ENCODE measurements at regions of chr2 and their contacts with region 1.

Region 1: DNA sequence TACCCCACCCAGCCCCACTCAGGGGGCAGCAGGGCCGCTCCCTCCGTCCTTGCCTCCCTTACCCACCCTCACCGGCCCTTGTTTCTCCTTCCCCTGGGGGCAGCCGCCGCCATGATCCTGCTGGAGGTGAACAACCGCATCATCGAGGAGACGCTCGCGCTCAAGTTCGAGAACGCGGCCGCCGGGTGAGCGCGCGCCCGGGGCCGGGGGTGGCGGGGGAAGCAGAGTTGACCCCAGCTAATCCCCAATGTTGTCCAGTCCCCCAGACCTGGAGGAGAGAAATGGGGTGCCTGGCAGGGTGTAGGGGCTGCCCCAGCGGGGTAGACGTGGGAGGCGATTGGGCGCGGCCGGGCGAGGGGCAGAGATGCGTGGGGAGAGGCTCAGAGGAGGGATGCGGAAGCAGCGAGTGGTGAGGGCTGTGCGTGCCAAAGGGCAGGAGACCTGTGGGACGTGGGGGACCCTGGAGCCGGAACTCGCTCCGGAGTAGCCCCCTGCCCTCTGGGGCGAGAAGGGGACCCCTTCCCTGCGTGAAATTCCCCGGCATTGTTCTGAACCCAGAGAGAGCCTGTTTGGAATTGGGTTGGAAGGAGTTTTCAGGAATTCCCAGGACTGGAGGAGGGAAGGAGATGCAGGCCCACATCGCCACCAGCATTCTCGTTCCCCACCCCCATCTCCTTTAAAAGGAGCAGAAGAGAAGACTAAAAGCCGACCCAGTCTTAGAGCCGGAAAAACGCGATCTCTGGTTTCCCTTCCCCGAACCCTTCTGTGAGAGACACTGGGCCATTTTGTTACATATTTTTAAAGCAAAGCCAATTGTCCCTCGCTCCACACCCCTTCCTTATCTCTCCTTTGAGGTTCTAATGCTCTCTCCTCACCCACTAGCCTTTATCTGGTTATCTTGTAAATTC is 625 bp downstream of the ARPC2 start:
- DNase-seq: peak; percentile 49 to 78 (median 73)
- H3K4me3 ChIP-seq: peak overlapping the region; percentile 91 to 99 (median 95)
- H3K27ac ChIP-seq: peak overlapping the region; percentile 94 to 96
- H3K4me1 ChIP-seq: peaks cover 35 to 56% (median 50%) of the 10 kb centered on the region in 4 experiments
- H3K27me3 ChIP-seq: no peaks in the 10 kb centered on the region

Region 2: DNA sequence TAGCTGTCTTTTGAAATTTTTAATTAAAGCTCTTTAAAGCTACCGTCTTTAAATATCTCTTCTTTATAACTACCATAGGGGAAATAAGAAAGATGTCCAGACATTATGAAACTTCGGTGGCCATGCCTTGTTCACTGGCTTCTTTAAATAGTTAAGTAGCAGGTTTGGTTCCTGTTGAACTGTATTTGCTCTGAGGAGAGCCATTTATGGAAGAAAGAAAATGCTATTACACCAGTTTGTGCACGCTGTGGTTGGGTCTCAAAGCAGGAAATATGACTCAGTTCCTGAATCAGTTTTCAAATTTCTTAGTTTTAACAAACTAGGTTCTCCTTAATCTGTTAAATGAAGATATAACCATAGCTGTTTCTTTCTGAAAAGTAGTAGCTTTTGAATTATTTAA is 11.6 kb after region 1 on chr2:
- CTCF ChIA-PET with region 1: interaction called, 59 read pairs
- POLR2A ChIA-PET with region 1: interaction called, 9 read pairs
- DNase-seq: peak; percentile 64 to 91 (median 83)
- H3K4me3 ChIP-seq: peak overlapping the region in 4 of 7 experiments; percentile 13 to 59 (median 22)
- H3K27ac ChIP-seq: peak overlapping the region; percentile 58 to 81
- H3K4me1 ChIP-seq: peaks cover 27 to 32% (median 32%) of the 10 kb centered on the region in 4 experiments
- H3K27me3 ChIP-seq: no peaks in the 10 kb centered on the region

Region 3: GRCh38 chr2:218245214-218245613 is 27.6 kb after region 1 on chr2:
- CTCF ChIA-PET with region 1: interaction called, 18 read pairs
- POLR2A ChIA-PET with region 1: no interaction called
- DNase-seq: no peak
- H3K4me3 ChIP-seq: no peak overlapping the region
- H3K27ac ChIP-seq: no peak overlapping the region
- H3K4me1 ChIP-seq: no peaks in the 10 kb centered on the region
- H3K27me3 ChIP-seq: no peaks in the 10 kb centered on the region